ENCODE measurements at regions of chrX and their contacts with region 1.

Region 1: DNA sequence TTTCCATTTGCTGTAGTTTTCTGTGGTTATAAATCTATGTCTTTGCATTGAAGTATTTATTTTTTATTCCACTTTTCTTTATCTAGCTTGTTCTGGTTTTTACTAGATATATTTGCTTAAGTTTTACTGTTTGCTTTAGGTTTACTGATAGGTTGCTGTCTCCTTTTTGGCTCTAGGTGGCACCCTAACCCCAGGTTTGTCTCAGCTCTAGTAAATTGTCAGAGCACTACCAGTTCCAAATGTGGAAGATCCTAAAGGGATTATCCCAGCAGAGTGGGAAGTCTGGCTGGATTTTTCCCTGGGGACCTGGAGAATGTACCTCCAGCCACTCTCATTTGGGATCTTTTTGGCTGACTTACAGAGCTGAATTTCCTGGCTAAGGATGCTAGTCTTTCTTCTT is 106.1 kb downstream of the PBDC1 start:
- DNase-seq: no peak

Region 2: DNA sequence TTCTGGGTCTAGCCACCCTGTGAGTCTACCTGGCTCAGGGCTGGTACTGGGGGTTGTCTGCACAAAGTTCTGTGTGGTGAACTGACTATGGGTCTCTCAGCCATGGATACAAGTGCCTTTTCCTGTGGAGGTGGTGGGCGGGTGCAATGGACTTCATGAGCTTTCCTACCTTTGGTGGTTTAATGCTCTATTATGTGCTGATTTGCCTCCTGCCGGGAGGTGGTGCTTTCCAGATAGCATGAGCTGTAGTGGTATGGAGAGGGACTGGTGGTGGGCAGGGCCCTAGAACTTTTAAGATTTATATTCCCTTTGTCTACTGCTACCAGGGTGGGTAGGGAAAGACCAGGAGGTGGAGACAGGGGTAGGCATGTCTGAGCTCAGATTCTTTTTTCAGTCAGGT is 58.1 kb before region 1 on chrX:
- intact Hi-C with region 1: no loop called
- DNase-seq: no peak

Region 3: GRCh38 chrX:76454456-76454927 is 175.5 kb after region 1 on chrX:
- intact Hi-C with region 1: loop called (anchors 5 kb)
- DNase-seq: peak; percentile 31

Region 4: GRCh38 chrX:77493677-77494553 is 1214.9 kb after region 1 on chrX:
- intact Hi-C with region 1: no loop called
- DNase-seq: no peak

Measured in cardiac septum (tissue), 1 donor.